CD14-positive monocyte (primary cell): ENCODE measurements at regions of chr6 and their contacts with region 1.

Region 1: DNA sequence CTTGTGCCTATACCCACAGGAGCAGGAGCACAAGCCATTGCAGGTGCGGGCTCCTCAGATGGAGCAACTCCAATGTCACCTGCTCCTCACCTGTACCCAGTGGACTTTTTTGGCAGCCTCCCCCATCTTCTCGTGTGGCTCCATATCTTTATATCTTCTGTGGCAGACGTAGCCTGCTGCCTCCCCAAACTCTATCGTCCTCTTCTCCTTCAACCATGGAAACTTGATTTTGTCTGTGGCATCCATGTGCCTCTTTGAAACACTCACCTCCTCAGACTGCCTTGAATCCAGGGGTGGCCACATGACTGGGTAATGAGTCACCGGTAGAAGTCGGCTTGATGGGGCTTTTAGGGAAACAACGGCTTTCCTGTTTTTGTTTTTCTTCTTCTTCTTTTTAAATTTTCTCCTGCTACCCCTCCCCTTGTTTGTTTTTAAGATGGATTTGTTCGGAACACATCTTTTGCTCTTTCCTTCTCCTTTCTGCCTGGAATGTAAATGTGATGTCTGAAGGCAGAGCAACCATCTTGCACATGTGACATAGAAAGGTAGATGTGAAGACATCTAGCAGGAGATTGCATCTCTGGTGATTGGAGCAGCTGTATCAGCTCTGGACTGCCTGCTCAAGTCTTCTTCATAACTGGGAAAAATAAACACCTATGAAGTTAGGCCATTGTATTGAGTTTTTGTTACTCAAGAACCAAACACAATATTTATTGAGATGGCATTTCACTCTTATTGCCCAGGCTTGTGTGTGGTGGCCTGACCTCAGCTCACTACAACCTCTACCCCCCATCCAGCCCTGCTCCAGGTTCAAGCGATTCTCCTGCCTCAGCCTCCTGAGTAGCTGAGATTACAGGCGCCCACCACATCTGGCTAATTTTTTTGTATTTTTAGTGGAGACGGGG is 69.9 kb upstream of the DDR1 start:
- DNase-seq: peak; percentile 82 to 95 (median 91)
- H3K4me3 ChIP-seq: peak overlapping the region in 1 of 3 experiments; percentile 21
- H3K4me3 Mint-ChIP-seq: peak overlapping the region in 1 of 2 donors; percentile 75
- H3K27ac ChIP-seq: peak overlapping the region; percentile 86 to 90
- H3K27ac Mint-ChIP-seq: peak overlapping the region; percentile 90 to 98 (median 96)
- H3K4me1 ChIP-seq: peaks cover 62 to 71% of the 10 kb centered on the region in 2 donors
- H3K4me1 Mint-ChIP-seq: peaks cover 73% of the 10 kb centered on the region
- H3K27me3 ChIP-seq: no peaks in the 10 kb centered on the region
- H3K27me3 Mint-ChIP-seq: peaks cover 0 to 6% (median 0%) of the 10 kb centered on the region in 3 donors
- CTCF ChIP-seq: no peak

Region 2: DNA sequence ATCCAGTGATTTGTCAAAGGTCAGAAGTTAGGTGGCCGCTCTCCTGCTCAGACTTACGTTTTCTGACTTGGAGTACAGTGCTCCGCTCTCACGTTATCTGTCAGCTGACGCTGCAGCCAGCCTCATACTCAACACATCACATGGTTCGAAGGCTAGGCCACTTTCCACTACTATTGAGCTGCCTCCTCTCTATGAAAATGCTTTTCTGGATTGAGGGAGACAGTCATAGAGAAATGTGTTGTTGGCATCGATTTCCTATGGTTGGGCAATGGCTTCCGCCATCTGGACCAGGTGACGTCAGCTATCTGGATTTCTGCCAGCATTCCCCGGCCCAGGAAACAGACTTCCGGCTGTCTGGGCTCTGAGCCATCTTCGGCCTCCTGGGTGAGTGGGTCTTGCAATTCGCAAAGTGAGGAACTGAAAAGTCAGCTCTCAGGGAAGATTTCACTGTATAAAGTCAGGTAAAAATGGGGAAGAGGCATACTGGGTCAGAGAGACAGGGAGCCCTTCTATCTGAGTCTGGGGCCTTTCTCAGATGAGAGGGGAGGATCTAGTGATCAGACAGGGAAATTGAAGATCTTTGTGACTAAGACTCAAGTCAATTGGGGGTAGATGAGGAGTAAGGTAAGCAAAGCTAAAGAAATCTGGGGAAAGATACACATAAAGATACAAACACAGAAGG is 32.5 kb before region 1 on chr6:
- intact Hi-C with region 1: loop called in 1 of 2 experiments (anchors 5 kb)
- DNase-seq: peak; percentile 98 to 99 (median 99)
- H3K4me3 ChIP-seq: peak overlapping the region in 1 of 3 experiments; percentile 53
- H3K4me3 Mint-ChIP-seq: peak overlapping the region in 1 of 2 donors; percentile 78
- H3K27ac ChIP-seq: peak overlapping the region; percentile 91 to 98
- H3K27ac Mint-ChIP-seq: peak overlapping the region; percentile 95 to 100 (median 99)
- H3K4me1 ChIP-seq: peaks cover 99 to 100% of the 10 kb centered on the region in 2 donors
- H3K4me1 Mint-ChIP-seq: peaks cover 92% of the 10 kb centered on the region
- H3K27me3 ChIP-seq: no peaks in the 10 kb centered on the region
- H3K27me3 Mint-ChIP-seq: no peaks in the 10 kb centered on the region
- CTCF ChIP-seq: no peak